ENCODE measurements at regions of chr19 and their contacts with region 1.

Region 1: GRCh38 chr19:11597202-11598102 is at the start of gene ZNF627:
- H3K4me3 Mint-ChIP-seq: peak within 1 kb of the TSS; percentile 99
- H3K27ac Mint-ChIP-seq: peak within 1 kb of the TSS; percentile 92
- H3K4me1 Mint-ChIP-seq: peaks cover 34% of the 10 kb centered on the region
- H3K27me3 Mint-ChIP-seq: no peaks in the 10 kb centered on the region

Region 2: DNA sequence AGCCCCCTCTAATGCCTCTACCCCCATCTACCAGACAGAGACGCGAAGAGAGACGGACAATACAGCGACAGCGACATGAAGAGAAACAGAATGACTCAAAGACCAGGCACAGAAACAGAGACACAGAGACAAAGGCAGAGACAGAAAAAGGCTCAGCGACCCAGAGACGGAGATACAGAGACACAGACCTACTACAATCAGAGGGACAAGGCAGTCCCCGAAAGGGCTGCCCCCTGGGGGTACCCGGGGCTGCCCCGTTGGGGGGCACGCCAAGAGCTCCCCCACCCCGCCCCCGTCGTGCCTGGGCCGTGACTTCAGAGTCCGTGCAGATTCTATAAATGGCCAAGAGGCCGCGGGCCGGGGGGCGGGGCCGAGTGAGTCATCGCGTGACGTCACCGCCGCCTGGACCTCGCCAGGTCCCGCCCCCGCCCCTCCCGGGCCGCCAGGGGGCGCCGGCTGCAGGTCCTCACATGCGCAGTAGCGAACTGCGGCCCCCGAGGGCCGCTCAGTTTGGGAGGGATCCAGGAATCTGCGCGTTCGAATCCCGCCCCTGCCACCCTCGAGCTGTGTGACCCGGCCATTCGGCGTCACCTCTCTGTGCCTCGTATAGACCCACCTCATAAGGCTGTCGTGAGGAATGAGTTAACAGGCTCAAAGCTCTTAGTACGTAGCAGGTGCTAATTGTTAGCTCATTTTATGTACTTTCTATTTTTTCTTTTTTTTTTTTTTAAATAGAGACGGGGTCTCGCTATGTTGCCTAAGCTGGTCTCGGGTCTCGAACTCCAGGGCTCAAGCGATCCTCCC is 61.5 kb before region 1 on chr19:
- intact Hi-C with region 1: no loop called
- H3K4me3 Mint-ChIP-seq: peak overlapping the region; percentile 17
- H3K27ac Mint-ChIP-seq: peak overlapping the region; percentile 64
- H3K4me1 Mint-ChIP-seq: peaks cover 18% of the 10 kb centered on the region
- H3K27me3 Mint-ChIP-seq: peaks cover 31% of the 10 kb centered on the region

Region 3: DNA sequence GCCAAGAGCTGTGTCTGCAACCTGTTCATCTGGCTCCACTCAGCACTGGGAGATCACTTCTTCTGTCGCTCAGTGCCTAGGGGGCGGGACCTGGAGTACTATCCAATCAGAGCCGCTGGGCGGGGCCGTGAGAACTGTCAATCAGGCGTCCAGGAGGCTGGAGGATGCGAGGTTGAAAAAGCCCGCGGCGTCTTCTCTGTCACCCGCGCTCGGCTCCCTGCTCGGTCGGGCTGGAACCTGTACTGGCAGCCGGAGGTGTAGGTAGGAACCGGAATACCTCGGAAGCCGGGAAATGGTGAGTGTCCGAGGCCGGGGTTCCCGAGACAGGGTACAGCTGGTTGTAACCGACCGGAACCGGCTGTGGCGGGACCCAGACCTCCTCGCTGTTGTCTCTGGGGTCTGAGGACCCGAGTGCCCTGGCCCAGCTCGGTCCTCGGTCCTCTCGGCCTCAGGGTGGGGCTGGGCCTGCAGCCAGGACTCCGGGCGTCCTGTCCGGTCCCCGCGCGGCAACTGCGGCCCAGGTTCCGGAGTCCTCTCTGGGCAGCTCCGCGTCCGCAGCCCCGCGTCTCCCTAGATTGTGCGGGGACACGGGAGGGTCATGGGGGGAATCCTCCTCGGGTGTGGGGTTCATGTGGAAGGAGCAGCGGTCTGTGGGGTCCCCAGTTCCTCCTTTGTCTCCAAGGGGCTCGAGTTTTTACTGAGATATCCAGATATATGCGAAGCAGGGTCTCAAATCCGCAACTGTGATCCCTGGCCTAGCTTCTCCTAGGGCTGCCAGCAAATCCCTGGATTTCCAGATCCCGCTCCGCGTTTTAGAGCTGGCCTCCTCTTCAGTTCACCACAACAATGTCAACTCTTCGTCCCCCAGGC is 42.4 kb after region 1 on chr19:
- intact Hi-C with region 1: loop called (anchors 5 kb)
- H3K4me3 Mint-ChIP-seq: peak overlapping the region; percentile 73
- H3K27ac Mint-ChIP-seq: no peak overlapping the region
- H3K4me1 Mint-ChIP-seq: no peaks in the 10 kb centered on the region
- H3K27me3 Mint-ChIP-seq: peaks cover 11% of the 10 kb centered on the region

Region 4: DNA sequence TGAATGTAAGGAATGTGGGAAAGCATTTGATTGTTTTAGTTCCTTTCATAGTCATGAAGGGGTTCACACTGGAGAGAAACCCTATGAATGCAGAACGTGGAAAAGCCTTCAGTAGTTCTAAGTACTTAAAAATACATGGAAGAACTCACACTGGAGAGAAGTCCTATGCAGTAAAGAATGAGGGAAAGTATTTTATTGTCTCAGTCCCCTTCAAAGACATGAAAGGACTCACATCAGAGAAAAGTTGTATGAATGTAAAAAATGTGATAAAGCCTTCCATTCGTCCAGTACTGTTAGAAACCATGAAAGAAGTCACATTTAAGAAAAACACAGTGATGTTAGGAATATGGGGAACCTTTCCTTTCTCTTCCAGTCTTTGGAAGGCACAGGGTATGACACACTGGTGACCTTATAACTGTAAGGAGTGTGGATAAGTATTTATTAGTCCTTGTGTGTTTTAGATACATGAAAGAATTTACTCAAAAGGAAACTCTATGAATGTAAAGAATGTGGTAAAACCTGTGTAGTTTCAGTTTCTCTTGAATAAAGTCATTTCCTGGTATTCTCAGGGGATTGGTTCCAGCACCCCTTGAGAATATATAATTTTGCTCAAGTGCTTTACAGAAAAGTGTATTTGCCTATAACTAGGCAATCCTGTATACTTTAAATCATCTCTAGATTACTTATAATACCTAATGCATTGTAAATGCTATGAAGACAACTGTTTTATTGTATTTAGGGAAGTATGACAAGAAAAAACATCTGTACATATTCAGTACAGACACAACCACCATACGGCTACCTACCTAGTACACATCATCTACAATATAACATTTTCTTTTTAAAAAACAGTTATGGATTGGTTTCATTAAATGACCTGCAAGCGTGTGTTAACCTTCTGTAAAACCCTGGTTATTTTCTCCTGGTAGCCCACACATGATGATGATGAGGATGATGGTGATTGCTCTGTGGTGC is 88.5 kb after region 1 on chr19:
- intact Hi-C with region 1: no loop called
- H3K4me3 Mint-ChIP-seq: no peak overlapping the region
- H3K27ac Mint-ChIP-seq: no peak overlapping the region
- H3K4me1 Mint-ChIP-seq: no peaks in the 10 kb centered on the region
- H3K27me3 Mint-ChIP-seq: no peaks in the 10 kb centered on the region

Region 5: DNA sequence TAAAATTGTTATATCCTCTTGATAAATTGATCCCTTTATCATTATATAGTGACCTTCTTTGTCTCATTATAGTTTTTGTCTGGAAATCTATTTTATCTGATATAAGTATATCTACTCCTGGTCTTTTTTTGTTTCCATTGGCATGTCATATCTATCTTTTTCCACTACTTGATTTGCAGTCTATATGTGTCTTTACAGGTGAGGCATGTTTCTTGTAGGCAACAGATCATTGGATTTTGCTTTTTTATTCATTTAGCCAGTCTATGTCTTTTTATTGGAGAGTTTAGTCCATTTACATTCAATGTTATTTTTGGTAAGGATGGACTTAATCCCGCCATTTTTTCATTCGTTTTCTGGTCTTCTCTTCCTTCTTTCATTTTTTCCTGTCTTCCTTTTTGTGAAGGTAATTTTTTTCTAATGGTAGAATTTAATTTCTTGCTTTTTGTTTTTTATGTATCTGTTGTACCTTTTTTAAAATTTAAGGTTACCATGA is 154.8 kb after region 1 on chr19:
- intact Hi-C with region 1: no loop called
- H3K4me3 Mint-ChIP-seq: no peak overlapping the region
- H3K27ac Mint-ChIP-seq: no peak overlapping the region
- H3K4me1 Mint-ChIP-seq: no peaks in the 10 kb centered on the region
- H3K27me3 Mint-ChIP-seq: peaks cover 8% of the 10 kb centered on the region

Measured in dendritic cell treated with granulocyte-macrophage colony-stimulating factor and Interleukin-4, amounts not matched to agents 40 ng/mL and 50 ng/mL, for 4 days (primary cell).